ENCODE measurements at regions of chr12 and their contacts with region 1.

Region 1: DNA sequence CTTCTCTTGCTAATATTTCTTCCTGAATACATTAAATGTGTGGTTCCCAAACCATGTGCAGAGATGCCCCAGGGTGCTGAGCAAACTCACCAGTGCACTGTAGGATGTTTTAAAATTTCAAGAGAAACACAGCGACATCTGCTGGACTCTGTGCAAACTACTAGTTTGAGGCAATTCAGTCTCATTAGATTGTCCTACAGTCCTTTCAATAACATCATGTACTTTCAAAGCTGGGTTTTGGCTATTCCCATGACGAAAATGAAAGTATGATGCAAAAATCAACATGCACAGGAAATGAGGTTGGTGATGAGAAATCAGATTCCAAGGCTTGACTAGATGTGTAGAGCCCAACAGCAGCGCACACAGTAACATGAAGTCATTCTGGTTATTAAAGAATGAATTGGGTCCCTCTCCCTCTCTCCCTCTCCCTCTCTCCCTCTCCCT is 66.3 kb downstream of the CLIP1 start:
- DNase-seq: peak; percentile 10 to 64 (median 53)
- ATAC-seq: peak; percentile 85
- H3K4me3 ChIP-seq: no peak overlapping the region
- H3K4me3 Mint-ChIP-seq: no peak overlapping the region
- H3K27ac ChIP-seq: no peak overlapping the region
- H3K27ac Mint-ChIP-seq: no peak overlapping the region
- H3K4me1 ChIP-seq: no peaks in the 10 kb centered on the region
- H3K4me1 Mint-ChIP-seq: peaks cover 5% of the 10 kb centered on the region
- H3K27me3 ChIP-seq: no peaks in the 10 kb centered on the region
- H3K27me3 Mint-ChIP-seq: no peaks in the 10 kb centered on the region
- CTCF ChIP-seq: peak; percentile 90

Region 2: DNA sequence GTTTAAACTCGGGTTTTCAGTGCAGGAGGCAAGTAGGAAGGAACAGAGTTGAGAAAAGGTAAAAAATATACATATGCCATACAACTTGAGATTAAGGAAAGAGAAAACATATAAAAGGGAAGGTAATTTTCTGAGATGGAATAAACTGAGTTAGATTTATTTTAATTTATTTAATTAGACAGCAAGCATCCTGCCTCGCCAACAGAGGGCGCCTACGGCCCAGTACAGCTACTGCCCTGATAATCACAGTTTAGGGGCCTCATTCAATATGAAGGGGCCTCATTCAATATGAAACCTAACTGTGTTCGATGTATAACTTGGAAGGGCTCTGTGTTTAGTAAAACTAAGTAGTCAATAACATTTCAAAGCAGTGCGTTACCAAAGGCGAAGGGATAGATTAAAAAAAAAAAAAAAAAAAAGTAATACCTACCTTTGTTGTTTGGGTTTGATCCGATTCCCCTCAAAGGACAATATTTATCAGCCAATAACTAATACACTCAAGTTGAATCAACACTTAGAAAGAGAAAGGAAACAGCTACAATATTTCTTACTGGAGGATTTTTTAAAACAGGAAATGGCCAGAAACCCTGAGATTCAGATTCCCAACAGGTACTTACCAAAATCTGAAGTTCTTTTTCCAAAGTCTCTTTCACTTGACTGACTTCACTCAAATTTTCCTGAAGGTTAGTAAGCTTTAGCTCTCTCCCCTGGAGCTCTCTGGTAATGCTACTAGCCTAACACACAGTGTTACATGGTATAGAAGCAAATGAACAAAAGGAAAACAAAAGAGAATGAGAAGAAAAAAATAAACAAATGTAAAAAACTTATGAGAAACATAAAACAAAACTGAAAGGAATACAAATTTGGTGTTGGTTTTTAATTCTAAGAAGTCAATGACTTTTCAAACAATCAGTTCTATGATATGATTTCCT is 19.9 kb before region 1 on chr12:
- CTCF ChIA-PET with region 1: interaction called, 16 read pairs
- POLR2A ChIA-PET with region 1: no interaction called
- intact Hi-C with region 1: no loop called
- DNase-seq: peak in 8 of 9 experiments; percentile 16 to 61 (median 52)
- ATAC-seq: no peak
- H3K4me3 ChIP-seq: no peak overlapping the region
- H3K4me3 Mint-ChIP-seq: no peak overlapping the region
- H3K27ac ChIP-seq: no peak overlapping the region
- H3K27ac Mint-ChIP-seq: no peak overlapping the region
- H3K4me1 ChIP-seq: no peaks in the 10 kb centered on the region
- H3K4me1 Mint-ChIP-seq: peaks cover 6% of the 10 kb centered on the region
- H3K27me3 ChIP-seq: no peaks in the 10 kb centered on the region
- H3K27me3 Mint-ChIP-seq: no peaks in the 10 kb centered on the region
- CTCF ChIP-seq: peak; percentile 37

Region 3: GRCh38 chr12:122345042-122345441 is 11.2 kb before region 1 on chr12:
- CTCF ChIA-PET with region 1: interaction called, 13 read pairs
- POLR2A ChIA-PET with region 1: no interaction called
- intact Hi-C with region 1: no loop called
- DNase-seq: no peak
- ATAC-seq: no peak
- H3K4me3 ChIP-seq: no peak overlapping the region
- H3K4me3 Mint-ChIP-seq: no peak overlapping the region
- H3K27ac ChIP-seq: no peak overlapping the region
- H3K27ac Mint-ChIP-seq: peak overlapping the region; percentile 27
- H3K4me1 ChIP-seq: no peaks in the 10 kb centered on the region
- H3K4me1 Mint-ChIP-seq: no peaks in the 10 kb centered on the region
- H3K27me3 ChIP-seq: no peaks in the 10 kb centered on the region
- H3K27me3 Mint-ChIP-seq: no peaks in the 10 kb centered on the region
- CTCF ChIP-seq: no peak

Region 4: DNA sequence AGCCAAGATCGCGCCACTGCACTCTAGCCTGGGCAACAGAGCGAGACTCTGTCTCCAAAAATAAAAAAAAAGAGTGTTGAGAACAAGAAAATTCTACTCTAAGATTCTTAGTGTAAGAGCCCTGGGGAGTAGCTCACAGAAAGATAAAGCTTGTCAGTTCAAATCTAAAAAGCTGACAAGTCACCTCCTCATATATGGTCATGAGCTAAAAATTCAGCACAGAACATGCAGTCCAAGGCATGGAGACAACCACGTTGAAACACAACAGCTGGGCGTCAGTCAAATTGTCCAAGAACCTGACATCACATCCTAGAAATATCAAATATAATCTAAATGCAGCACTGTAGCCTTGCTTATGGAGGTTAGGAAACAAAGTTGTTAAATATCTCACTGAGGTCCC is 18.5 kb after region 1 on chr12:
- CTCF ChIA-PET with region 1: interaction called, 14 read pairs
- POLR2A ChIA-PET with region 1: interaction called, 3 read pairs
- intact Hi-C with region 1: no loop called
- DNase-seq: no peak
- ATAC-seq: no peak
- H3K4me3 ChIP-seq: no peak overlapping the region
- H3K4me3 Mint-ChIP-seq: no peak overlapping the region
- H3K27ac ChIP-seq: no peak overlapping the region
- H3K27ac Mint-ChIP-seq: no peak overlapping the region
- H3K4me1 ChIP-seq: no peaks in the 10 kb centered on the region
- H3K4me1 Mint-ChIP-seq: peaks cover 13% of the 10 kb centered on the region
- H3K27me3 ChIP-seq: no peaks in the 10 kb centered on the region
- H3K27me3 Mint-ChIP-seq: no peaks in the 10 kb centered on the region
- CTCF ChIP-seq: no peak

Measured in CD8-positive, alpha-beta T cell (primary cell).